ENCODE measurements at regions of chr1 and their contacts with region 1.

Region 1: GRCh38 chr1:179586107-179586823 is 5.4 kb upstream of the TDRD5 start:
- DNase-seq: peak in 1 of 2 experiments; percentile 84
- H3K4me3 ChIP-seq: peak overlapping the region; percentile 3 to 53 (median 14); a peak in 6 of 8 replicates
- H3K27ac ChIP-seq: no peak overlapping the region
- H3K4me1 ChIP-seq: peaks cover 0 to 4% (median 2%) of the 10 kb centered on the region in 4 experiments; a peak in 2 of 7 replicates
- H3K27me3 ChIP-seq: peaks cover 11 to 37% (median 28%) of the 10 kb centered on the region in 4 experiments
- CTCF ChIP-seq: peak; percentile 61 to 77 (median 68)
- EP300 ChIP-seq: no peak
- POLR2A ChIP-seq: no peak
- RAD21 ChIP-seq: peak; percentile 38 to 54; a peak in 3 of 4 replicates

Region 2: DNA sequence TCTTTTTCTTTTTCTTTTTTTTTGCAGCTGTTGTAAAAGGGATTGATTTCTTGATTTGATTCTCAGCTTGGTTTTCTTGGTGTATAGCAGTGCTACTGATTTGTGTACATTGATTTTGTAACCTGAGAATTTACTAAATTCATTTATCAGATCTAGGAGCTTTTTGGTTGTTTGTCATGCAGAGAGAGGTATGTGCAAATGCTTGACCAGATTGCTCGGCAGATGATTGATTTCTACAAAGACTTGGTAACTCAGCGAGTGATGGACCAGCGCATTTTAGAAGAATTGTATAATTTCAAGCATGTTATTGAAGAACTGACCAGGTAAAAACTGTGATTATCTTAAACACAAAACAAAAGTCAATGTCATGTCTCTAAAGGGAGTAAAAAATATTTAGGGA is 192.5 kb before region 1 on chr1:
- CTCF ChIA-PET with region 1: no interaction called
- POLR2A ChIA-PET with region 1: no interaction called
- DNase-seq: no peak
- H3K4me3 ChIP-seq: no peak overlapping the region
- H3K27ac ChIP-seq: no peak overlapping the region
- H3K4me1 ChIP-seq: no peaks in the 10 kb centered on the region
- H3K27me3 ChIP-seq: no peaks in the 10 kb centered on the region
- CTCF ChIP-seq: no peak
- EP300 ChIP-seq: no peak
- POLR2A ChIP-seq: no peak
- RAD21 ChIP-seq: no peak

Region 3: GRCh38 chr1:179575497-179576314 is 10.6 kb before region 1 on chr1 and contains the start of gene NPHS2:
- CTCF ChIA-PET with region 1: interaction called, 10 read pairs
- POLR2A ChIA-PET with region 1: interaction called, 4 read pairs
- DNase-seq: peak in 1 of 2 experiments; percentile 74
- H3K4me3 ChIP-seq: peak within 1 kb of the TSS; percentile 39 to 65 (median 44)
- H3K27ac ChIP-seq: no peak within 1 kb of the TSS
- H3K4me1 ChIP-seq: no peaks in the 10 kb centered on the region; a peak in 1 of 7 replicates
- H3K27me3 ChIP-seq: peaks cover 19 to 35% (median 32%) of the 10 kb centered on the region in 4 experiments
- CTCF ChIP-seq: peak in 2 of 3 experiments; percentile 8 to 33; a peak in 2 of 4 replicates
- EP300 ChIP-seq: no peak
- POLR2A ChIP-seq: no peak
- RAD21 ChIP-seq: peak in 1 of 2 experiments; percentile 12; a peak in 1 of 4 replicates
- total RNA-seq, gene NPHS2: not detected in 2 replicates

Measured in H1 (cell line).